ENCODE measurements at regions of chr7 and their contacts with region 1.

Region 1: DNA sequence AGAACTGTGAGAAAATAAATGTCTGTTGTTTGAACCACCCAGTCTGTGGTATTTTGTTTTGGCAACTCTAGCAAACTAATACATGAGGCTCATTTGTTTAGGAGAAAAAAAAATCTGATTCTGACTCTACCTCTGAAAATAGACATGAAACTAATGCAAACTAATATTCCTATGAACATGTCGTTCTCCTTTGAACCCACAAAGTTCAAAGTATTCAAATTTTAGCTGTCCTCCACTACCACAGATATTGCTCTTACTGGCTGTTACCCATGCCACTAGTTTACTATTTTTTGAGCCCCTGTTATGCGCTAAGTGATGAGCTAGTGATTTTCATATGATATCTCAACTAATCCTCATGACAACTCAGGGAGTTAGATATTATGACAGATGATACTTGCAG is 58.8 kb upstream of the ZNF804B start:
- DNase-seq: no peak
- H3K4me3 ChIP-seq: no peak overlapping the region
- H3K27ac ChIP-seq: no peak overlapping the region
- H3K4me1 ChIP-seq: no peaks in the 10 kb centered on the region
- H3K27me3 ChIP-seq: no peaks in the 10 kb centered on the region
- CTCF ChIP-seq: no peak

Region 2: GRCh38 chr7:88686468-88687229 is 14.1 kb before region 1 on chr7:
- CTCF ChIA-PET with region 1: no interaction called
- POLR2A ChIA-PET with region 1: no interaction called
- intact Hi-C with region 1: no loop called
- DNase-seq: no peak
- H3K4me3 ChIP-seq: no peak overlapping the region
- H3K27ac ChIP-seq: no peak overlapping the region
- H3K4me1 ChIP-seq: no peaks in the 10 kb centered on the region
- H3K27me3 ChIP-seq: no peaks in the 10 kb centered on the region
- CTCF ChIP-seq: no peak

Region 3: GRCh38 chr7:88759230-88760135 is 58.8 kb after region 1 on chr7 and contains the start of gene ZNF804B:
- CTCF ChIA-PET with region 1: interaction called, 15 read pairs
- POLR2A ChIA-PET with region 1: no interaction called
- intact Hi-C with region 1: no loop called
- DNase-seq: no peak
- H3K4me3 ChIP-seq: no peak within 1 kb of the TSS
- H3K27ac ChIP-seq: no peak within 1 kb of the TSS
- H3K4me1 ChIP-seq: no peaks in the 10 kb centered on the region
- H3K27me3 ChIP-seq: no peaks in the 10 kb centered on the region
- CTCF ChIP-seq: no peak
- total RNA-seq, gene ZNF804B: not detected in 2 replicates